Thyroid gland (tissue), 4 donors: ENCODE measurements at regions of chr7 and their contacts with region 1.

Region 1: DNA sequence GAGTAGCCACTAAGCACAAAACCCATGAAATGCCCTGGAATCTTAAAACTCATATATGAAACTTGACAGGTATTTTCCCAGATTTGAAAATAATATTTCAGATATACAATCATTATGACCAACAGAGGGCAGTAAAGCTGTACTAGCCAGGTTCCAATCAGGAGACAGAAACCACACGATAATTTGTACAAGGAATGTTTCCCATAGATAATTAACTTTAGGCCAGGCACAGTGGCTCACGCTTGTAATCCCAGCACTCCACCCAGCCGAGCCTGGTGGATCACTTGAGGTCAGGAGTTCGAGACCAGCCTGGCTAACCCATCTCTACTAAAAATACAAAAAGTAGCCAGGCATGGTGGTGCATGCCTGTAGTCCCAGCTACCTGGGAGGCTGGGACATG is 31.0 kb upstream of the NUB1 start:
- DNase-seq: no peak
- H3K4me3 ChIP-seq: no peak overlapping the region
- H3K27ac ChIP-seq: no peak overlapping the region
- H3K4me1 ChIP-seq: no peaks in the 10 kb centered on the region
- H3K27me3 ChIP-seq: no peaks in the 10 kb centered on the region
- CTCF ChIP-seq: peak in 4 of 6 experiments; percentile 9 to 40 (median 22)
- POLR2A ChIP-seq: no peak

Region 2: DNA sequence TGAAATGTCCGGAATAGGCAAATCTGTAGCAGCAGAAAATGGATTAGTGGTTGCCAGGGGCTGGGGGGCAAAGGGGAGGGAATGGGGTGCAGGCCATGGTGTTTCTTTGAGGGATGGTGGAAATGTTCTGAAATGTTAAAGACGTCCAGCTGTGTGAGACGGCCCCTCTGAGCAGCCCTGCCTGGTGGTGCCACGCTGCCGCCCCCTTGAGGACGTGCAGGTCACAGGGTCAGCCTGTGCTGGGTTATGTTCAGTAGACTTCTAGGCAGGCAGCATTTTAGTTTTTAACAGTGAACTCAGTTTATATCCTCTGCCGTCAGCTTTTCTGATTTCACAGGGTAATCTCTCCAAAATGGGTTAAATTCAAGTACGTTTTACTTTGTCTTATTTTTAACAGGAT is 40.4 kb after region 1 on chr7:
- intact Hi-C with region 1: loop called (anchors 5 kb)
- DNase-seq: no peak
- H3K4me3 ChIP-seq: no peak overlapping the region
- H3K27ac ChIP-seq: no peak overlapping the region
- H3K4me1 ChIP-seq: peaks cover 20 to 29% of the 10 kb centered on the region in 2 donors
- H3K27me3 ChIP-seq: no peaks in the 10 kb centered on the region
- CTCF ChIP-seq: no peak
- POLR2A ChIP-seq: no peak

Region 3: DNA sequence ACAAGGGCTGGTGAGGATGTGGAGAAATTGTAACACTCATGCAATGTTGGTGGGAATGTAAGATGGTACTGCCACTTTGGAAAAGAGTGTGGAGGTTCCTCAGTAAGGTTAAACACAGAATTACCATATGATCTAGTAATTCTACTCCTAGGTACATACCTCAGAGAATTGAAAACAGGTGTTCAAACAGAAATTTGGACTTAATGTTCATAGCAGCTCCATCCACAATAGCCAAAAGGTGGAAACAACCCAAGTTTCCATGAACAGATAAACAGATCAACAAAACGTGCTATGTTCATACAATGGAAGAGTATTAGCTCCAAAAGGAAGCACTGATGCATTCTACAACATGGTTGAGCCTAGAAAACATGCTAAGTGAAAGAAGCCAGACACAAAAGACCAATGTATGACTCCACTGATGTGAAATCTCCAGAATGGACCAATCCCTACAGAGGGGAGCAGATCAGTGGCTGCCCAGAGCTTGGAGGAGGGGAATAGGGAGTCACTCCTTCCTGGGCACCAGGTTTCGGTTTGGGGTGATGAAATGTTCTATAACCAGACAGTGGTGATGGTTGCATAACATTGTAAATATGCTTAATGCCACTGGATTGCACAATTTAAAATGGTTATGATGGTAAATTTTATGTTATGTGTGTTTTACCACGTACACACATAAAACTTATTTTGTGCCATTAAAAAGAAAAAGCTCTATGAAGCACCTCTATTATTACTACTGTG is 105.0 kb after region 1 on chr7:
- intact Hi-C with region 1: no loop called
- DNase-seq: no peak
- H3K4me3 ChIP-seq: no peak overlapping the region
- H3K27ac ChIP-seq: no peak overlapping the region
- H3K4me1 ChIP-seq: peaks cover 3 to 24% of the 10 kb centered on the region in 2 donors
- H3K27me3 ChIP-seq: no peaks in the 10 kb centered on the region
- CTCF ChIP-seq: no peak
- POLR2A ChIP-seq: no peak

Region 4: DNA sequence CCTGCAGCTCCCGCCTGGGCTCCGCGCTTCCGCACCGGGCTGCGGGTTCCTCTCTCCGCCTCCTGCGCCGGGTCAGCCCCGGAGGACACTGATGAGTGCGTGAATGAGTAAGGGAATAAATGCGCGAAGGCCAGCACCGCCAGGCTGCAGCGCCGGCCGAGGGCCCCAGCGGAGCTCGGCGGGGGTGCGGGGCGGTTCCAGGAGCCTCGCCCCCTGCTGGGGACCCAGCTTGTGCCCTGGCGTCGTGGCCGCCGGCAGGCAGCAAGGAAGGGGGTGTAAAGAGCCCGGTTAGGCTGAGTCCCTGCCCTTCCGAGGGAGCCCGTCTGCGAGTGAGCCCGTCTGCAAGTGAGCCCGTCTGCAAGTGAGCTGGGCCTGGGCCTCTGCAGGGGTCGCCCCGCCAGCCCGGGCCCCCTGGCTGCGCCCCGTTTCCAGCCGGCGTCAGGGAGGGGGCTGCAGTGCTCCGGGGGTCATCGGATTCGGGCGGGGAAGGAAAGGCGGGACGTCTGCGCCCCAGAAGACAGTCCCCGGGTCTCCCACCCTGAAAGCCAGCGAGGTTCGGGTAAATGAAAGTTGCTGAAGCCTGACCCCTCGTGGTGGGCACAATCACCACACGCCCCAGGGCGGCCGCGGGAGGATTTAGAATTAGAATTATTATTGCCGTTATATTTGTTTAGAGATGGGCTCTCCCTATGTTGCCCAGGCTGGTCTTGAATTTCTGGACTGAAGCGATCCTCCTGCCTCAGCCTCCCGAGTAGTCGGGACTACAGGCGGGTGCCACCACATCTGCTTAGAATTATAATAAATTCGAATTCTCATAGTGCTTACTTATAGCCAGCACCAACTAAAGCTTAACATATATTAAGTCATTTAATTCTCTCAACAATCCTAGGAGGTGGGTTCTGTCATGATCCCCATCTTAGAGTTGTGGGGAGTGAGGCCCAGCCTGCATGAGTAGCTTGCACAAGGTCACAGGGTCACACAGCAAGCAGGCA is 138.0 kb after region 1 on chr7:
- intact Hi-C with region 1: loop called (anchors 5 kb)
- DNase-seq: peak; percentile 69 to 76
- H3K4me3 ChIP-seq: peak overlapping the region in 1 of 3 donors; percentile 29
- H3K27ac ChIP-seq: peak overlapping the region in 2 of 3 donors; percentile 14 to 61
- H3K4me1 ChIP-seq: peaks cover 3 to 6% of the 10 kb centered on the region in 2 donors
- H3K27me3 ChIP-seq: no peaks in the 10 kb centered on the region
- CTCF ChIP-seq: peak; percentile 61 to 88 (median 81)
- POLR2A ChIP-seq: no peak